Common myeloid progenitor, CD34-positive (primary cell): ENCODE measurements at regions of chr11 and their contacts with region 1.

Region 1: GRCh38 chr11:119388103-119388502 is 6.6 kb upstream of the USP2 start:
- DNase-seq: no peak
- H3K4me3 ChIP-seq: no peak overlapping the region
- H3K27ac ChIP-seq: no peak overlapping the region
- H3K4me1 ChIP-seq: no peaks in the 10 kb centered on the region
- H3K27me3 ChIP-seq: peaks cover 2 to 12% (median 5%) of the 10 kb centered on the region in 5 experiments

Region 2: GRCh38 chr11:119373921-119374631 is 14.0 kb before region 1 on chr11:
- CTCF ChIA-PET with region 1: interaction called, 51 read pairs
- POLR2A ChIA-PET with region 1: no interaction called
- DNase-seq: peak; percentile 44 to 61 (median 50)
- H3K4me3 ChIP-seq: no peak overlapping the region
- H3K27ac ChIP-seq: no peak overlapping the region
- H3K4me1 ChIP-seq: peaks cover 0 to 3% (median 0%) of the 10 kb centered on the region in 4 experiments
- H3K27me3 ChIP-seq: peaks cover 0 to 3% (median 0%) of the 10 kb centered on the region in 5 experiments